A673 (cell line): ENCODE measurements at regions of chr6 and their contacts with region 1.

Region 1: GRCh38 chr6:15628499-15629131 is 34.2 kb downstream of the DTNBP1 start:
- DNase-seq: peak; percentile 44
- H3K4me3 ChIP-seq: no peak overlapping the region
- H3K27ac ChIP-seq: peak overlapping the region; percentile 71
- H3K4me1 ChIP-seq: peaks cover 52% of the 10 kb centered on the region
- H3K27me3 ChIP-seq: no peaks in the 10 kb centered on the region
- CTCF ChIP-seq: no peak

Region 2: DNA sequence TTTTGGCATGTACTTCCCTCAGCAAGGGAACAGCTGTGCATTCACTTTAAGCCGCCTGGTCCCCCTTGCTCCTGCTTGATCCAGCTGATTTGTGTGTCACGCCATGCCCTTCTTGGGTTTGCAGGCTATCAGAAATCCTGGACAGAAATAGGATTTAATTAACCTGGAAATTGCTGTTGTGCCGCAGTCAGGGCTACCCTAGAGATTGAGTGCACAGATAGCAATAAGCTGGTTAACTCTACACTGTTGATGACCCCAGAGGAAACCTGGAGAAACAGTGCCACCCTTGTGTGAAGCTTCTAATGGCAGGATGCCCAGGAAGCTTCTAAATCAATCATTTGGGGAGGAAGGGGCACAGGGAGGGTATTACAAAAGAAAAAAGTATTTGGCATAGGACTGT is 183.7 kb before region 1 on chr6:
- CTCF ChIA-PET with region 1: no interaction called
- POLR2A ChIA-PET with region 1: no interaction called
- intact Hi-C with region 1: loop called (anchors 2 kb)
- DNase-seq: peak; percentile 81
- H3K4me3 ChIP-seq: no peak overlapping the region
- H3K27ac ChIP-seq: no peak overlapping the region
- H3K4me1 ChIP-seq: peaks cover 73% of the 10 kb centered on the region
- H3K27me3 ChIP-seq: no peaks in the 10 kb centered on the region
- CTCF ChIP-seq: peak; percentile 45